ENCODE measurements at regions of chr1 and their contacts with region 1.

Region 1: GRCh38 chr1:91684481-91685196 is 184.0 kb downstream of the CDC7 start:
- DNase-seq: peak; percentile 29
- ATAC-seq: peak; percentile 86
- H3K4me3 Mint-ChIP-seq: peak overlapping the region; percentile 52
- H3K27ac Mint-ChIP-seq: peak overlapping the region; percentile 84
- H3K4me1 Mint-ChIP-seq: peaks cover 23% of the 10 kb centered on the region
- H3K27me3 Mint-ChIP-seq: peaks cover 2% of the 10 kb centered on the region

Region 2: GRCh38 chr1:91697416-91697815 is 12.8 kb after region 1 on chr1:
- POLR2A ChIA-PET with region 1: interaction called, 10 read pairs
- DNase-seq: peak; percentile 41
- ATAC-seq: peak; percentile 100
- H3K4me3 Mint-ChIP-seq: peak overlapping the region; percentile 82
- H3K27ac Mint-ChIP-seq: peak overlapping the region; percentile 92
- H3K4me1 Mint-ChIP-seq: peaks cover 30% of the 10 kb centered on the region
- H3K27me3 Mint-ChIP-seq: no peaks in the 10 kb centered on the region

Measured in activated naive CD8-positive, alpha-beta T cell treated with anti-CD3 and anti-CD28 coated beads, Interleukin-2, amount 10 ng/mL, durations not matched to agents 7 days and 5 days (primary cell).